ENCODE measurements at regions of chr10 and their contacts with region 1.

Region 1: GRCh38 chr10:62244780-62245467 is 23.7 kb downstream of the RTKN2 start:
- DNase-seq: peak; percentile 62
- H3K4me3 Mint-ChIP-seq: no peak overlapping the region
- H3K27ac Mint-ChIP-seq: peak overlapping the region; percentile 69
- H3K4me1 Mint-ChIP-seq: peaks cover 37% of the 10 kb centered on the region
- H3K27me3 Mint-ChIP-seq: no peaks in the 10 kb centered on the region

Region 2: GRCh38 chr10:61750929-61751471 is 493.9 kb before region 1 on chr10:
- CTCF ChIA-PET with region 1: interaction called, 10 read pairs
- POLR2A ChIA-PET with region 1: no interaction called
- intact Hi-C with region 1: loop called (anchors 1 kb)
- DNase-seq: peak; percentile 84
- H3K4me3 Mint-ChIP-seq: no peak overlapping the region
- H3K27ac Mint-ChIP-seq: peak overlapping the region; percentile 44
- H3K4me1 Mint-ChIP-seq: peaks cover 24% of the 10 kb centered on the region
- H3K27me3 Mint-ChIP-seq: no peaks in the 10 kb centered on the region

Region 3: DNA sequence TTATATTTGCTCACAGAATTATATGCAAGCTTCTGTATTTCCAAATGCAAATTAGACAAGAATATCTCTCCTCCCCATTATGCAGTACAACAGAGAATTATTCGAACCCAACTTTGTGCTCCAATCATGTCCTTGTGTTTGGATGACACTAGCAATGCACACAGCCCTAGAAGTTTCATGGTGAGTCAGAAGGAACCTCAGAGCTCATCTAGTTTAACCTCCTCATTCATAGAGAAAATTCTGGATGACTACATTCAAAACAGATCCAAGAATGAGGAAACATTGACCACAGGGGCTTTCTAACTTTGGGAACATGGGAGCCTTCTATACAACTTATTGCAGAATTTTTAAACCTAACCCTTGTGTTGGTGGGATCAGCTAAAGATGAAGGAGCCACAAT is 356.2 kb before region 1 on chr10:
- CTCF ChIA-PET with region 1: no interaction called
- POLR2A ChIA-PET with region 1: no interaction called
- intact Hi-C with region 1: no loop called
- DNase-seq: no peak
- H3K4me3 Mint-ChIP-seq: no peak overlapping the region
- H3K27ac Mint-ChIP-seq: no peak overlapping the region
- H3K4me1 Mint-ChIP-seq: peaks cover 15% of the 10 kb centered on the region
- H3K27me3 Mint-ChIP-seq: no peaks in the 10 kb centered on the region

Region 4: DNA sequence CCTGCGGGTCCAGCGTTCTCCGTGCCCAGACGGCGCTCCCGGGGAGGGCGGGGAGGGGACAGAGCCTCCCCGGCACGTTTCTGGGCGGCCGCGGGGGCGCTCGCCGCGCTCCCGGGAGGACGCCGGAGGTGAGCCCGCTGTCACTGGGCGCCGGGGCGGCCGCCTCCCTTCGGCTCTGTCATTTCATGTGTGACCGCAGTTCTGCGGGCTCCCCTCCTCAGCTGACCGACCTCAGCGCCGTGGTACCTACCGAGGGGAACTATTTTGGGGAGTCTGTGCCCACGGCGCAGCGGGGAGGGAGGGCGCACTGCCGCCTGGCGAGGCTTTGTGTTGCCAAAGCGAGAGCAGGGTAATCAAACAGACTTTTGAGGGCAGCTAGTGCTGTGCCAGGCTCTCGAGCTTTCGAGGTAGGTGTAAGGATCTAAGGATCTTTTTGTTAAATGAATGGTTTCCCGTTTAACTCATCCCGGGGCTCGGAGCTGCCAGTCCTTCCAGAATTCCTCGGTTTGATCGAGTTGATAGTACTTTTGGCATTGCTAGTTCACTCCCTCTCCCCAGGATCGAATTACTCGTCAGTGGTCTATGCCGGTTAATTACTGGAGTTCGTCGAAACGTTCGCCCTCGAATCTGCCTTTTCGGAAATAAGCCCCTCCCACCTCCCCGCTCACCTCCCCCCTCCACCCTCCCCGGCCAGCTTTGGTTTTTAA is 341.6 kb before region 1 on chr10:
- CTCF ChIA-PET with region 1: interaction called, 19 read pairs
- POLR2A ChIA-PET with region 1: interaction called, 5 read pairs
- intact Hi-C with region 1: loop called (anchors 1 kb)
- DNase-seq: peak; percentile 84
- H3K4me3 Mint-ChIP-seq: peak overlapping the region; percentile 90
- H3K27ac Mint-ChIP-seq: peak overlapping the region; percentile 95
- H3K4me1 Mint-ChIP-seq: peaks cover 45% of the 10 kb centered on the region
- H3K27me3 Mint-ChIP-seq: no peaks in the 10 kb centered on the region

Region 5: DNA sequence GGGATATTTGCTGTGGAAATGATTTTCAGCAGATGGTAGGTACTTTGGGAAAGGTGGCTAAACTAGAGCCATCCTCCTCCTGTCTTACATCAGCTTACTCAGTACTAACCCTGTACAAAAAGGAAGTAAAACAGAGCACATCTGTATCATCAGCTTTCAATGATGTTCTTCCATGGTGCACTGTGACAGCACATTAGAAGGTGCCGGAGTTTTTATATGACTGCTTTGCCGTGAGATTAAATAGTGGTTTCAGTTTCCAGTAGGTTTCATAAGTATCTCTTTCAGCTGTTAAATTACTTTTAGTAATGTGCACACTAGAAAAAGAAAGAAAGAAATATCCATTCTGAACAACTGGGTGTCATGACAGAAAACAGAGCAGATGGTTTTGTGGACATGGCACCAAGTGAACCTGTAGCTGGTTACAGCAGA is 257.0 kb before region 1 on chr10:
- CTCF ChIA-PET with region 1: interaction called, 8 read pairs
- POLR2A ChIA-PET with region 1: interaction called, 3 read pairs
- intact Hi-C with region 1: loop called (anchors 1 kb)
- DNase-seq: peak; percentile 50
- H3K4me3 Mint-ChIP-seq: peak overlapping the region; percentile 59
- H3K27ac Mint-ChIP-seq: peak overlapping the region; percentile 95
- H3K4me1 Mint-ChIP-seq: peaks cover 91% of the 10 kb centered on the region
- H3K27me3 Mint-ChIP-seq: no peaks in the 10 kb centered on the region

Region 6: DNA sequence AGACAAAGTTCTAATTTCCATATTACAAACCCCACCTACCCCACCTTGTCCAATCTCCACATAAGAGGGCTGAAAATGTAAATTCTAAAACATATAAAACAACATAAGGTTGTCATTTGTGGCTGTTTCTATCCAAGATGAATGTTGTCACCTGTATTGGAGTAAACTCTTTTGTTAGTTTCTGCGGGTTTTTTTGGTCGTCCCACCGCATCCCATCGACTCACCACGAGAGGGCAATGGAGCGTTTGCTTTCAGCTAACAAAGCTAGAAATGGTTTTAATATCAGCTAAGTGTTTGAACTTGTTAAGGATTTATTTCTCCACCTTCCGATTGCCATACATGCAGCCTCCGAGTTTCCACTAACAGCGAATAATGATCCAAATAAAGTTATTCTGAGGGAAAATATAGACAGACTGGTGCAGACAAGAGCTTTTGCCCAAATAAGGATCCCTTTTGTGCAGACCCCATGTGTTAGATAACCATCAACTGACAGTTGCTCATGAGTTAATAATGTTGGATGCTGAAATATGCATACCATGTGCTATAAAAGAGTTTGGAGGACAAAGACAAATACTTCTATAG is 206.2 kb before region 1 on chr10:
- CTCF ChIA-PET with region 1: interaction called, 94 read pairs
- POLR2A ChIA-PET with region 1: interaction called, 7 read pairs
- intact Hi-C with region 1: loop called (anchors 1 kb)
- DNase-seq: peak; percentile 85
- H3K4me3 Mint-ChIP-seq: peak overlapping the region; percentile 47
- H3K27ac Mint-ChIP-seq: peak overlapping the region; percentile 84
- H3K4me1 Mint-ChIP-seq: peaks cover 81% of the 10 kb centered on the region
- H3K27me3 Mint-ChIP-seq: no peaks in the 10 kb centered on the region

Region 7: GRCh38 chr10:62109587-62110293 is 135.2 kb before region 1 on chr10:
- CTCF ChIA-PET with region 1: interaction called, 3 read pairs
- POLR2A ChIA-PET with region 1: no interaction called
- intact Hi-C with region 1: loop called (anchors 5 kb)
- DNase-seq: no peak
- H3K4me3 Mint-ChIP-seq: no peak overlapping the region
- H3K27ac Mint-ChIP-seq: no peak overlapping the region
- H3K4me1 Mint-ChIP-seq: peaks cover 46% of the 10 kb centered on the region
- H3K27me3 Mint-ChIP-seq: no peaks in the 10 kb centered on the region

Region 8: GRCh38 chr10:62233494-62234283 is 11.2 kb before region 1 on chr10:
- CTCF ChIA-PET with region 1: interaction called, 10 read pairs
- POLR2A ChIA-PET with region 1: interaction called, 3 read pairs
- intact Hi-C with region 1: no loop called
- DNase-seq: no peak
- H3K4me3 Mint-ChIP-seq: peak overlapping the region; percentile 54
- H3K27ac Mint-ChIP-seq: peak overlapping the region; percentile 64
- H3K4me1 Mint-ChIP-seq: peaks cover 32% of the 10 kb centered on the region
- H3K27me3 Mint-ChIP-seq: no peaks in the 10 kb centered on the region

Region 9: GRCh38 chr10:62278441-62278910 is 33.6 kb after region 1 on chr10:
- CTCF ChIA-PET with region 1: no interaction called
- POLR2A ChIA-PET with region 1: no interaction called
- intact Hi-C with region 1: no loop called
- DNase-seq: no peak
- H3K4me3 Mint-ChIP-seq: no peak overlapping the region
- H3K27ac Mint-ChIP-seq: no peak overlapping the region
- H3K4me1 Mint-ChIP-seq: no peaks in the 10 kb centered on the region
- H3K27me3 Mint-ChIP-seq: no peaks in the 10 kb centered on the region